CD14-positive monocyte (primary cell): ENCODE measurements at regions of chr12 and their contacts with region 1.

Region 1: DNA sequence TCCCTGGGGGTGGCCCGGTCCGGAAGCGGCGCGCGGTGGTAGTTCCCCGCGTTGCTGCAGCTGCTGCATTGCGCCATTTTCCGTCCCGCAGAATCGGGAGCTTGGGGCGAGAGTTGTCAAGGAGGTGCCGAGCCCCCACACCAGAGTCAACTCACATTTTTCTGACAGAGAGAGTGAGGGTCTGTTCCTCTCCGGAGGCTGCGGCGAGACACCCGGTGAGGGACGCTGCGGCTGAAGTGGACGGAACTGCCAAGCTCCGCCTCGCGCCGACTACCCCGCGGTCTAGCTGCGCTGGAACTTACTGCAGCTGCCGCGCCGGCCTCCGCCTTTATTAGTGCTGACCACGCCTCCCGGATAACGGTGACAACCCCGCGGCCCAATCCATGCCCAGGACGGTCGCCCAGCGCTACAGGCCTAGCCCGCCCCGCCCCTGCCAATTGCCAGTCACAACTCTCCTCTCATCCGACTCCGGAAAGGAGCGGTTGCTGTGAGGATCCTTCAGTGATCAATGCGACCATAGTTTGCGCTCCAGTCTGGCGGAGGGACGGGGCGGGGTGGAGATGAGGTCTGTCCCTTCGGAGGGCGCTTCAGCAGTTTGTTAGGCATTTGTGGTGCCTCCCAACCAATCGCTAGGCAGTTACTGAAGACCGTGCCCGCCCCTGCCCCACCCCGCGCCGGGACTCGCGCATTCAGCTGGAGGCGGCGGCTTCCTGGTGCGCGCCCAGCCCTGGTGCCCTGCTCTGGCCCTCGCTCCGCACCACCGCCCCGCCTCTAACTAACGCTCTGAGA is at the start of gene VAMP1:
- DNase-seq: peak; percentile 93
- H3K4me3 ChIP-seq: peak within 1 kb of the TSS; percentile 52 to 88 (median 86)
- H3K4me3 Mint-ChIP-seq: peak within 1 kb of the TSS; percentile 84 to 90
- H3K27ac ChIP-seq: peak within 1 kb of the TSS; percentile 77 to 83
- H3K27ac Mint-ChIP-seq: peak within 1 kb of the TSS; percentile 92 to 98 (median 95)
- H3K4me1 ChIP-seq: peaks cover 19 to 35% of the 10 kb centered on the region in 2 donors
- H3K4me1 Mint-ChIP-seq: peaks cover 41% of the 10 kb centered on the region
- H3K27me3 ChIP-seq: no peaks in the 10 kb centered on the region
- H3K27me3 Mint-ChIP-seq: peaks cover 0 to 2% (median 1%) of the 10 kb centered on the region in 3 donors
- CTCF ChIP-seq: no peak
- polyA plus RNA-seq, gene VAMP1: 0.84 to 24.6 (median 0.85) TPM

Region 2: GRCh38 chr12:6250343-6250742 is 220.2 kb before region 1 on chr12:
- intact Hi-C with region 1: no loop called
- DNase-seq: no peak
- H3K4me3 ChIP-seq: no peak overlapping the region
- H3K4me3 Mint-ChIP-seq: no peak overlapping the region
- H3K27ac ChIP-seq: no peak overlapping the region
- H3K27ac Mint-ChIP-seq: peak overlapping the region in 1 of 7 donors; percentile 31
- H3K4me1 ChIP-seq: no peaks in the 10 kb centered on the region
- H3K4me1 Mint-ChIP-seq: no peaks in the 10 kb centered on the region
- H3K27me3 ChIP-seq: no peaks in the 10 kb centered on the region
- H3K27me3 Mint-ChIP-seq: peaks cover 3 to 22% (median 9%) of the 10 kb centered on the region in 3 donors
- CTCF ChIP-seq: no peak

Region 3: GRCh38 chr12:6285063-6285477 is 185.5 kb before region 1 on chr12:
- intact Hi-C with region 1: no loop called
- DNase-seq: peak; percentile 46 to 70 (median 67)
- H3K4me3 ChIP-seq: no peak overlapping the region
- H3K4me3 Mint-ChIP-seq: no peak overlapping the region
- H3K27ac ChIP-seq: no peak overlapping the region
- H3K27ac Mint-ChIP-seq: peak overlapping the region in 2 of 7 donors; percentile 73 to 74
- H3K4me1 ChIP-seq: no peaks in the 10 kb centered on the region
- H3K4me1 Mint-ChIP-seq: peaks cover 4% of the 10 kb centered on the region
- H3K27me3 ChIP-seq: peaks cover 0 to 4% of the 10 kb centered on the region in 2 donors
- H3K27me3 Mint-ChIP-seq: peaks cover 8 to 21% (median 12%) of the 10 kb centered on the region in 3 donors
- CTCF ChIP-seq: peak; percentile 98

Region 4: DNA sequence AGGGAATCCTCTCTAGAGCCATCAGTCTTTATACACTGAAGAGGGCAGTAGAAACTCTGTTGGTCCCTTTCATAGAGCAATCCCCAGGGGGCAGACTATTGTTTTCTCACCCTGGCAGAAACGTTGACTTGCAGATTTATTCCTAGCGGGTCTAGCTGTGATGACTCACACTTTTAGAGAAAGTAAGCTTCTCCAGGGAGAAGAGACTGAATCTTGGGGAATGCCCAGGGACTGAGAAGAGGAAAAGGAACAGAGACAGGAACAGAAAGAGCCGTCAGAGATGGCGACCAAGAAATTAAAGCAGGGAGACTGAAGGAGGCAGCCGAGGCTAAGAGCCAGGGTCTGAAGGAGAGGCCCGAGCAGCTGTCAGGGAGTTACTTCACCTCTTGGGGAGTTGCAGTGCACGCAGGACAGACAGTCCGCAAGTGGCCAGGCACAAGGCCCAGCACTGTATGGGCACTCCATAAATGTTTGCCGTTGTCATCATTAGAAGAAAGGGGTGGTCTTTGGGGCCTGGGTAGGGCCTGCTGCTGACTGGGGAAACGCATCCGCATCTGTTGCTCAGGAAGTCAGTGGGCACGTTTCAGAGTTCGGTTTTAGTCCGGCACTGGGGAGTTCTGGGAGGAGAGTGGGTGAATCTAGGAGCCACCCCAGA is 147.1 kb before region 1 on chr12:
- intact Hi-C with region 1: loop called in 1 of 2 experiments (anchors 5 kb)
- DNase-seq: peak; percentile 66 to 95 (median 89)
- H3K4me3 ChIP-seq: peak overlapping the region in 1 of 3 experiments; percentile 41
- H3K4me3 Mint-ChIP-seq: peak overlapping the region; percentile 72 to 82
- H3K27ac ChIP-seq: peak overlapping the region; percentile 17 to 38
- H3K27ac Mint-ChIP-seq: peak overlapping the region; percentile 81 to 95 (median 87)
- H3K4me1 ChIP-seq: peaks cover 39 to 50% of the 10 kb centered on the region in 2 donors
- H3K4me1 Mint-ChIP-seq: peaks cover 52% of the 10 kb centered on the region
- H3K27me3 ChIP-seq: peaks cover 0 to 4% of the 10 kb centered on the region in 2 donors
- H3K27me3 Mint-ChIP-seq: peaks cover 14 to 22% (median 21%) of the 10 kb centered on the region in 3 donors
- CTCF ChIP-seq: peak; percentile 72

Region 5: DNA sequence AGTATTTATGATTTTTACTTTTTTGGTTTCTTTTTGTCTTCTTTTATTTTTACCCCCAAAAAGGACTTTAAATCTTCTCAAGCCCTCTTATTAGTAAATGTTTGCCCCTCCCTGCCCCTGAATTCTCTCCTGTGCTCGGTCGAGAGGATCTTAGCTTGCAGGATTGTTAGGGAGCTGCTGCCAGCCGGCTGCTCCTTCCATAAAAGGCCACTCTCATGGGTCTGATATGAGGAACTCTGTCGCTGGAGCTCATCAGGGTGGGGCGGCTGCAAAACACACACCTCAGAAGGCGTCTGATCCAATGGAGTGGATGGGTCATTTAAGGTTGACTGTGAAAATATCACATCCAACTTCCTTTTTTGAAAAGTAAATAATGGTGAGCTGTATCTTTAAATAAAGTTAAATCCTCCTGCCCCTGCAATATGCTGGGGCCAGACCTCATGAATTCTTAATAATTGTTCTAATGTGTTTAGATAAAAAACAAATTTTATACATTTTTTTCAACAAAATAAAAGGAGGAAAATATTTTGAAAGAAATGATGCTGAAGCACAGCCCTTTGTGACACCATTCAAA is 78.0 kb before region 1 on chr12:
- intact Hi-C with region 1: no loop called
- DNase-seq: peak in 1 of 3 donors; percentile 43
- H3K4me3 ChIP-seq: no peak overlapping the region
- H3K4me3 Mint-ChIP-seq: peak overlapping the region; percentile 51 to 73
- H3K27ac ChIP-seq: peak overlapping the region in 1 of 2 donors; percentile 61
- H3K27ac Mint-ChIP-seq: peak overlapping the region in 6 of 7 donors; percentile 39 to 86 (median 82)
- H3K4me1 ChIP-seq: peaks cover 31 to 49% of the 10 kb centered on the region in 2 donors
- H3K4me1 Mint-ChIP-seq: peaks cover 60% of the 10 kb centered on the region
- H3K27me3 ChIP-seq: no peaks in the 10 kb centered on the region
- H3K27me3 Mint-ChIP-seq: peaks cover 0 to 5% (median 0%) of the 10 kb centered on the region in 3 donors
- CTCF ChIP-seq: no peak

Region 6: GRCh38 chr12:6423267-6424007 is 47.1 kb before region 1 on chr12:
- intact Hi-C with region 1: loop called in 1 of 2 experiments (anchors 2 kb)
- DNase-seq: peak; percentile 90 to 94 (median 93)
- H3K4me3 ChIP-seq: no peak overlapping the region
- H3K4me3 Mint-ChIP-seq: no peak overlapping the region
- H3K27ac ChIP-seq: peak overlapping the region in 1 of 2 donors; percentile 15
- H3K27ac Mint-ChIP-seq: peak overlapping the region in 4 of 7 donors; percentile 7 to 52 (median 26)
- H3K4me1 ChIP-seq: peaks cover 20 to 29% of the 10 kb centered on the region in 2 donors
- H3K4me1 Mint-ChIP-seq: peaks cover 22% of the 10 kb centered on the region
- H3K27me3 ChIP-seq: no peaks in the 10 kb centered on the region
- H3K27me3 Mint-ChIP-seq: peaks cover 0 to 4% (median 0%) of the 10 kb centered on the region in 3 donors
- CTCF ChIP-seq: peak; percentile 85

Region 7: GRCh38 chr12:6493497-6494257 is 23.1 kb after region 1 on chr12 and contains the start of gene NCAPD2:
- intact Hi-C with region 1: loop called in 1 of 2 experiments (anchors 2 kb)
- DNase-seq: peak; percentile 91 to 95 (median 91)
- H3K4me3 ChIP-seq: peak within 1 kb of the TSS; percentile 61 to 92 (median 90)
- H3K4me3 Mint-ChIP-seq: peak within 1 kb of the TSS; percentile 97 to 98
- H3K27ac ChIP-seq: peak within 1 kb of the TSS; percentile 88 to 91
- H3K27ac Mint-ChIP-seq: peak within 1 kb of the TSS; percentile 95 to 99 (median 99)
- H3K4me1 ChIP-seq: peaks cover 20 to 30% of the 10 kb centered on the region in 2 donors
- H3K4me1 Mint-ChIP-seq: peaks cover 22% of the 10 kb centered on the region
- H3K27me3 ChIP-seq: no peaks in the 10 kb centered on the region
- H3K27me3 Mint-ChIP-seq: peaks cover 0 to 3% (median 2%) of the 10 kb centered on the region in 3 donors
- CTCF ChIP-seq: peak; percentile 19
- polyA plus RNA-seq, gene NCAPD2: 6.2 to 15.0 (median 8.3) TPM

Region 8: DNA sequence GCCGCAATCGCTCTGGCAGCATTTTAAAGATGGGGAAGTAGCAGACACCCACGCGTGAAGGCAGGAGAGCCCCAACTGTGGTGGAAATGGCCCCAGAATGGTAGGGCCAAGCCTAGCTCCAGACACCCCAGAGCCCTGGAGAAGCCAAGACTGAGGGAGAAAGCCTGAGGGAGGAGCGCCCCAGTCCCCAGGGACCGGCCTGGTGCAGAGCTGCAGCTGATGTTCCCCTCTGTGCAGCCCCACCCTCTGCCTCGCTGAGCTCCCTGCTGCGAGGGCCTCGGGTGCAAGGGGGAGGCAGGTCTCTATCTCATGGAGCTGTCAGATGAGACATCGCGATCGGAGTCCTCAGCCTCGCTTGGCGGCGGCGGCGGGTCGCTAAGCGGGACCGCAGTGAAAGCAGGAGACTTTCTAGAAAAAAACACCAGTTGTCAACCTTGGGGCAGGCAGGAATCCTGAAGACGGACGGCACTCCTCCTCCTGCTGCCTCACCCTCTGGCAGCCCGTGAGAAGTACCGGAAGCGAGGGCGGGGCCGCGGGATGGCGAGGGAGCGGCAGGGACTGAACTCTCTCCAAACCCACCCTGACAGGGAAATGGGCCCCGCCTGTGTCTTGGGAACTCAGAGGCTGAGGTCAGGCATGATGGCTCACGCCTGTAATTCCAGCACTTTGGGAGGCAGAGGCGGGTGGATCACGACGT is 69.8 kb after region 1 on chr12:
- intact Hi-C with region 1: loop called (anchors 2 kb)
- DNase-seq: peak in 2 of 3 donors; percentile 62 to 69
- H3K4me3 ChIP-seq: peak overlapping the region in 1 of 3 experiments; percentile 23
- H3K4me3 Mint-ChIP-seq: peak overlapping the region; percentile 50 to 83
- H3K27ac ChIP-seq: peak overlapping the region; percentile 29 to 46
- H3K27ac Mint-ChIP-seq: peak overlapping the region; percentile 65 to 90 (median 80)
- H3K4me1 ChIP-seq: peaks cover 55 to 71% of the 10 kb centered on the region in 2 donors
- H3K4me1 Mint-ChIP-seq: peaks cover 70% of the 10 kb centered on the region
- H3K27me3 ChIP-seq: no peaks in the 10 kb centered on the region
- H3K27me3 Mint-ChIP-seq: peaks cover 0 to 2% (median 2%) of the 10 kb centered on the region in 3 donors
- CTCF ChIP-seq: no peak